Right ventricle myocardium inferior (tissue), 1 donor: ENCODE measurements at regions of chr2 and their contacts with region 1.

Region 1: GRCh38 chr2:9333591-9334171 is 89.6 kb downstream of the ITGB1BP1 start:
- DNase-seq: no peak
- ATAC-seq: peak; percentile 84

Region 2: GRCh38 chr2:8872821-8873432 is 460.8 kb before region 1 on chr2:
- intact Hi-C with region 1: loop called (anchors 5 kb)
- DNase-seq: no peak
- ATAC-seq: no peak